GM13977 (cell line): ENCODE measurements at regions of chr17 and their contacts with region 1.

Region 1: DNA sequence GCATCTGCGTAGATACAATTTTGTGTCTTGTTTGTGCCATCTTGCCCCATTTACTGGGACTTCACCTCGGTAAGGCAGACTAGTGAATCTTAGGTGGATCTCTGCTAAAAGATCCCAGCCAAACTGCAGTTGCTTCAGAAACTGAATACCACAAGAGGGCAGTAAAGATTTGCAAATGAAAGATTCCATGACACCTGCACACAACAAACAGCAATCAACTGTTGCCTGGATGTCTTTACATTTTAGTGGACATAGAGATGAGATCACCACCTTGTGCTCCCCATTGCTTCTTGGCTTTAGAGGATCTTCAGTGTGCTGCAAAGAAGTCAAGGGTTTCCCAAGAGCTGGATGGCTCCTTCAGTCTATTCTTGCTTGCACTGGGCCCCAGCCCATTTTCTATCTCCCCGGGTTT is 119.2 kb upstream of the CACNG5 start:
- DNase-seq: peak; percentile 66
- CTCF ChIP-seq: peak; percentile 62

Region 2: DNA sequence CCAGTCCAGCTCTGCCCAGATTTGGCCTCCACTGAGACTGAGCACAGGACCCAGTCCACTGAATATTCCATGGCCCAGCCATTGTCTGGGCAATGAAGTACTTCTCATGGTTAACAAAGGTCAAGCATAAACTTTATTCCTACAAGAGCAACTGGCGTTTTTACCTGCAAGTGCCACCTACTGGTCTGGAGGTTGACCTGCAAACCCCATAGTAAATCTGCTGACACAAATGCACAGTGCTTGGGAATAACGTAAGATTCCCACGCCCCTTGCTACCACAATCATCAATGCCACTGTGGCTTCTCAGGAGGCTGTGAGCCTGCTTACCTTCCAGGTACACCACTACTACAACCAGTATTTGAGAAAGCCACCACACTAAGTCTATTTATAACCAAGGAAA is 694.0 kb before region 1 on chr17:
- in situ Hi-C with region 1: no loop called
- DNase-seq: no peak
- CTCF ChIP-seq: no peak

Region 3: GRCh38 chr17:66850692-66851091 is 134.9 kb after region 1 on chr17:
- in situ Hi-C with region 1: no loop called
- DNase-seq: no peak
- CTCF ChIP-seq: no peak

Region 4: GRCh38 chr17:66906321-66907278 is 190.8 kb after region 1 on chr17:
- in situ Hi-C with region 1: loop called (anchors 10 kb)
- DNase-seq: peak; percentile 77
- CTCF ChIP-seq: peak; percentile 85